ENCODE measurements at regions of chr3 and their contacts with region 1.

Region 1: GRCh38 chr3:36846406-36846805 is 82.1 kb upstream of the DCLK3 start:
- DNase-seq: no peak
- ATAC-seq: no peak
- H3K4me3 ChIP-seq: no peak overlapping the region
- H3K27ac ChIP-seq: no peak overlapping the region
- H3K4me1 ChIP-seq: peaks cover 0 to 7% (median 0%) of the 10 kb centered on the region in 9 donors
- H3K27me3 ChIP-seq: no peaks in the 10 kb centered on the region
- CTCF ChIP-seq: no peak

Region 2: DNA sequence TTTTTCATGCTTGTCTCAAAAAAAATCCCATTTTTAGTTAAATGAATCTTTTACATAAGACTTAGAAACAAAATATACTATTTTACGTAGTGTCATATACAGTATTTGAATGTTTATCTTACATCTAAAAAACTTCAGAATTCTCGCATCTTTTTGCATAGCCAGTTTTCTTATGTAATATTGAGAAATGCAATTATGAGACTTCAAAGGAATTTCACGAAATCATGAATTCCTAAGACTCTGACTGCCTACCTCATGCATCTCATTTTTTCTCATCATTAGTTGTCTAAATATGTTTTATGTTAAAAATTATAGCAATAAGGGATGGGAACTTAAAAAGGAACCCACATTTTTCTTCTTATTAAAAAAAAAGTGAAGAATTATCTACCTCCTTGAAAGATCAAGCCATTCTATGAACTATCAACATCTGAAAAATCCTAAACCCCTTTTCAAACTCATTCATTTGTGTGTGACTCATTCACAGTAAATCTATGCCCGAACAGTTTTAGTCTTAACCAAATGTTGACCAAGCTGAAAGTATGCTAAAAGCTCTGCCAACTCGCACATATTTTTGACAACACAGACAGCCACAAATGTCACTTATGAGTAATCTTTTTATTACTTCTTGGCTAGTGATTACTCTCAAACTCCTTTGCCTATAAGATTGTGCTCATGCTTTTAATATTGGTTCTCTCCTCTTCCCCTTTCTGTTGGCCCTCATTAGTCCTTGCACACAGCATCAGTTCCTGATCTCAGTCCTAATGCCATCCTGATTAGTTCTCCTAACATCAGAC is 198.0 kb before region 1 on chr3:
- intact Hi-C with region 1: no loop called
- DNase-seq: no peak
- ATAC-seq: no peak
- H3K4me3 ChIP-seq: no peak overlapping the region
- H3K27ac ChIP-seq: no peak overlapping the region
- H3K4me1 ChIP-seq: peaks cover 0 to 10% (median 0%) of the 10 kb centered on the region in 9 donors
- H3K27me3 ChIP-seq: no peaks in the 10 kb centered on the region
- CTCF ChIP-seq: no peak

Region 3: GRCh38 chr3:36862076-36862755 is 15.8 kb after region 1 on chr3:
- intact Hi-C with region 1: loop called in 1 of 10 experiments (anchors 1 kb)
- DNase-seq: no peak
- ATAC-seq: no peak
- H3K4me3 ChIP-seq: no peak overlapping the region
- H3K27ac ChIP-seq: no peak overlapping the region
- H3K4me1 ChIP-seq: peaks cover 0 to 8% (median 0%) of the 10 kb centered on the region in 9 donors
- H3K27me3 ChIP-seq: no peaks in the 10 kb centered on the region
- CTCF ChIP-seq: no peak

Region 4: GRCh38 chr3:36969540-36970432 is 123.4 kb after region 1 on chr3:
- intact Hi-C with region 1: no loop called
- DNase-seq: peak in 1 of 2 donors; percentile 48
- ATAC-seq: peak; percentile 86 to 99 (median 94)
- H3K4me3 ChIP-seq: no peak overlapping the region
- H3K27ac ChIP-seq: peak overlapping the region in 9 of 10 donors; percentile 26 to 72 (median 55)
- H3K4me1 ChIP-seq: peaks cover 0 to 18% (median 3%) of the 10 kb centered on the region in 9 donors
- H3K27me3 ChIP-seq: no peaks in the 10 kb centered on the region
- CTCF ChIP-seq: no peak